SK-N-SH (cell line): ENCODE measurements at regions of chr18 and their contacts with region 1.

Region 1: DNA sequence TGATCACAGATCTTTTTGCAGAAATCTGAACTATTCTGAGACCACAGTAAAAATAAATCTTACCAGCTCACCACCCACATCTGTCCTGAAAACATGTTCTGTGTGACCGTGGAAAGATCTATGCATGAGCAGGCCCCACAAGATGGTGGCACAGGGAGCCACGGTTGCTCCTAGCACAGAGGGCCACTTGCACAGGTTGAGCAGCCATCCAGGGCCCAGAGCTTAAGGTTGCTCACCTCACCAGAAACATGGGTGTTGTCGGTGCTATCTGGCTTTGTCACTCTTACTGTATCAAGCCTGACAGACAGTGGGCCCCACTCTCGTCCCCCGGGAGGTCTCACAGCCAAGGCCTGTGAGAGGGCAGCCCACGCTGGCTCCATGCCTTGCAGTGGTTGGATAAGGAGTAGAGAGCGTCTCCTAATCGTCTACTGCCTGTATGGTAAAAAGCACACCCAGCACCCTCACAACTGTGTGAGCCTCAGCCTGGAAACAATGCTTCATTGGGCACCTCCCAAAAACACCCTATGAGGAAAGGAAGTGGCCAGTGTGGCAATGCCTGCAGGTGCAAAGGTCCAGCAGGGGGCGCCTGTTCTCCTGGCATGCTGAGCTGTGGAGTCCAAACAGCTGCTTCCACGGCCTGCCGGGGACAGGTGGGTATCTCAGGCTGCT is 19.6 kb downstream of the TUBB6 start:
- DNase-seq: peak; percentile 82
- H3K4me3 ChIP-seq: no peak overlapping the region; a peak in 1 of 4 replicates
- H3K27ac ChIP-seq: 0 out of 4 replicates have a peak overlapping the region, but pooled peaks of 1 of the 2 experiments have one; percentile 13
- H3K4me1 ChIP-seq: peaks cover 0 to 17% of the 10 kb centered on the region in 2 experiments; a peak in 1 of 4 replicates
- H3K27me3 ChIP-seq: no peaks in the 10 kb centered on the region
- CTCF ChIP-seq: peak; percentile 91
- EP300 ChIP-seq: no peak
- RAD21 ChIP-seq: peak; percentile 52

Region 2: GRCh38 chr18:12308386-12309100 is 19.1 kb before region 1 on chr18:
- CTCF ChIA-PET with region 1: interaction called, 30 read pairs
- POLR2A ChIA-PET with region 1: no interaction called
- DNase-seq: peak; percentile 76
- H3K4me3 ChIP-seq: peak overlapping the region; percentile 71 to 84
- H3K27ac ChIP-seq: peak overlapping the region; percentile 70 to 93
- H3K4me1 ChIP-seq: peaks cover 3 to 15% of the 10 kb centered on the region in 2 experiments; a peak in 2 of 4 replicates
- H3K27me3 ChIP-seq: no peaks in the 10 kb centered on the region
- CTCF ChIP-seq: no peak
- EP300 ChIP-seq: no peak; a peak in 1 of 4 replicates
- RAD21 ChIP-seq: no peak

Region 3: GRCh38 chr18:12340945-12341660 is 13.5 kb after region 1 on chr18:
- CTCF ChIA-PET with region 1: interaction called, 18 read pairs
- POLR2A ChIA-PET with region 1: no interaction called
- DNase-seq: no peak
- H3K4me3 ChIP-seq: no peak overlapping the region
- H3K27ac ChIP-seq: no peak overlapping the region
- H3K4me1 ChIP-seq: no peaks in the 10 kb centered on the region
- H3K27me3 ChIP-seq: no peaks in the 10 kb centered on the region
- CTCF ChIP-seq: no peak
- EP300 ChIP-seq: no peak
- RAD21 ChIP-seq: no peak

Region 4: DNA sequence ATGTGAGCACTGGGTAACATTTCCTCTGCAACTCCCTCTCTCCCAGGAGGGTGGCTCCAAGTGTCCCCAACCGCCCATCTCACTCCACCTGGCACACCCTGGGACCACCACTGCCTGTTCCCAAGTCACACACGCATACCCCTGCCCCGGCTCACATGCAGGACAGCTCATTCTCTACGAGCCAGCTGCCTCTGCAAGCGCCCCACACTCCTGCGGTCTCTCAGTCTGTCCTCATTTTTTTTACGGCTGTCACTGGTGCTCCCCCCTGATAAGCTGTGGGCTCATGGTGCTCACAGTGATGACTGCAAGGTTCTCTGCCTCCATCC is 18.6 kb after region 1 on chr18:
- CTCF ChIA-PET with region 1: interaction called, 18 read pairs
- POLR2A ChIA-PET with region 1: no interaction called
- DNase-seq: no peak
- H3K4me3 ChIP-seq: no peak overlapping the region
- H3K27ac ChIP-seq: no peak overlapping the region
- H3K4me1 ChIP-seq: no peaks in the 10 kb centered on the region
- H3K27me3 ChIP-seq: no peaks in the 10 kb centered on the region
- CTCF ChIP-seq: no peak
- EP300 ChIP-seq: no peak
- RAD21 ChIP-seq: no peak

Region 5: DNA sequence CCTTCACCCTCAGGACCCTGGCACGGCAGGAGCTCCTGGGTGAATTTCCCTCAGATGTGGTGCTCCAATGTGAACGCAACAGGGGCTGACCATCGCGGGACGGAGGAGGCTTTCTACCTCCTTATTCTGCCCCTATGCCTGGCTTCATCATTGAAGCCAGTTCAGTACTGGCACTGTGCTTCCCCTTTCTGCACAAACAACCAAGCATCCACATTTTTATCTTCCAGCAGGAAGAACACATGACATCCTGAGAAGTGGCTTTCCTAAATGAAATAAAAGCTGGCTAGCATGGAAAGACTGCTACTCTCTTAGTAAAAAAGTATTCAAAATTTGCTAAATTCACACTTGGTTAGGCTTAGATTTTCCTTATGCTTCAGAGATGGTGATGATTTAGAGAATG is 24.5 kb after region 1 on chr18:
- CTCF ChIA-PET with region 1: interaction called, 11 read pairs
- POLR2A ChIA-PET with region 1: interaction called, 4 read pairs
- DNase-seq: no peak
- H3K4me3 ChIP-seq: no peak overlapping the region
- H3K27ac ChIP-seq: no peak overlapping the region
- H3K4me1 ChIP-seq: no peaks in the 10 kb centered on the region
- H3K27me3 ChIP-seq: no peaks in the 10 kb centered on the region
- CTCF ChIP-seq: no peak
- EP300 ChIP-seq: no peak
- RAD21 ChIP-seq: no peak

Region 6: DNA sequence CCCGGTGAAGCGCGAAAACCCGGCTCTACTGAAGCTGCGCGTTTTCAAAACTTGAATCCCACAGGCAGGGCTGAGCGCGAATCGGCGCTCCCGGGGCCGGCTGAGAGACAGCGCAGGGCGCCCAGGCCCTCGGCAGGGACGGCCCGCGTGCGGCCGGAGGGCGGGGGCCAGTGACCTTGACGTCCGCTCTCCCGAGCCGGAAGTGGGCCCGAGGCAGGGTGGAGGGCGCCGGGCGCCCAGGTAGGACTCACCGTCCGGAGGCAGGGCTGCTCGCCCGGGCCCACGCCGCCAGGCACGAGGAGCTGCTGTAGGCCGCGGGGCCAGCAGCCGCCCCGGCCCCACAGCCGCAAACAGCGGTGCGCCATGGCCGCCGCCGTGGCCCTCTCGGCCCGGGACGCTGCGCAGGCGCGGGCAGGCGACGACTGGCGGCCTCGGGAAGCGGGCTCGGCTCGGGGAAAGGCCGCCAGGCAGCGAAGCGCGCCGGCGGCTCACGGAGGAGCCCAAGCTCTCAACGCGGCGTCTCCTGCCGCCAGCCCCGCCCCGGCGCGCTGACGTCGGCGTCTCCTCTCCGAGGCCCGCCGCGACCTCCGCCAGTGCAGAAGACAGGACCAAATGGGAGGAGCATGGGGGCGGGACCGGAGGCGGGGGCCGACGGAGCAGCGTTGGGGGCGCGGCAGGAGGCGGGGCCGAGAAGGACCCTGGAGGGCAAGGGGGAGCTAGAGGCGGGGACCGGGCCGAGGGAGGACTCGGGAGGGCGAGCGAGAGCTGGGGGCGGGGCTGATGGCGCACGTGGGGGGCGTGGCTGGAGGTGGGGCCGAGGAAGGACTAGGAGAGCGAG is 49.3 kb after region 1 on chr18 and contains the start of gene AFG3L2:
- CTCF ChIA-PET with region 1: interaction called, 11 read pairs
- POLR2A ChIA-PET with region 1: no interaction called
- DNase-seq: peak; percentile 98
- H3K4me3 ChIP-seq: peak within 1 kb of the TSS; percentile 77 to 90
- H3K27ac ChIP-seq: peak within 1 kb of the TSS; percentile 93 to 95
- H3K4me1 ChIP-seq: peaks cover 3 to 16% of the 10 kb centered on the region in 2 experiments; a peak in 2 of 4 replicates
- H3K27me3 ChIP-seq: no peaks in the 10 kb centered on the region
- CTCF ChIP-seq: no peak
- EP300 ChIP-seq: no peak; a peak in 1 of 4 replicates
- RAD21 ChIP-seq: no peak
- polyA plus RNA-seq, gene AFG3L2: 26.0 and 32.6 TPM in 2 replicates

Region 7: GRCh38 chr18:12391618-12392165 is 64.0 kb after region 1 on chr18:
- CTCF ChIA-PET with region 1: interaction called, 11 read pairs
- POLR2A ChIA-PET with region 1: no interaction called
- DNase-seq: peak; percentile 79
- H3K4me3 ChIP-seq: no peak overlapping the region; a peak in 1 of 4 replicates
- H3K27ac ChIP-seq: no peak overlapping the region
- H3K4me1 ChIP-seq: no peaks in the 10 kb centered on the region
- H3K27me3 ChIP-seq: no peaks in the 10 kb centered on the region
- CTCF ChIP-seq: peak; percentile 98
- EP300 ChIP-seq: no peak
- RAD21 ChIP-seq: peak; percentile 99